K562 (cell line): ENCODE measurements at regions of chr11 and their contacts with region 1.

Region 1: GRCh38 chr11:32176223-32176934 is 85.5 kb downstream of the RCN1 start:
- DNase-seq: peak; percentile 73 to 86 (median 82)
- ATAC-seq: peak; percentile 93
- H3K4me3 ChIP-seq: no peak overlapping the region
- H3K27ac ChIP-seq: no peak overlapping the region
- H3K4me1 ChIP-seq: no peaks in the 10 kb centered on the region
- H3K27me3 ChIP-seq: peaks cover under 1 to 18% of the 10 kb centered on the region in 2 experiments; a peak in 4 of 5 replicates
- CTCF ChIP-seq: peak; percentile 87 to 95 (median 88)
- EP300 ChIP-seq: no peak
- POLR2A ChIP-seq: no peak
- RAD21 ChIP-seq: peak; percentile 85 to 87

Region 2: GRCh38 chr11:31107062-31107461 is 1069.3 kb before region 1 on chr11:
- CTCF ChIA-PET with region 1: interaction called, 7 read pairs
- POLR2A ChIA-PET with region 1: no interaction called
- in situ Hi-C with region 1: no loop called
- intact Hi-C with region 1: loop called (anchors 2 kb)
- DNase-seq: peak; percentile 39 to 58 (median 46)
- ATAC-seq: peak; percentile 76
- H3K4me3 ChIP-seq: no peak overlapping the region
- H3K27ac ChIP-seq: no peak overlapping the region
- H3K4me1 ChIP-seq: no peaks in the 10 kb centered on the region
- H3K27me3 ChIP-seq: no peaks in the 10 kb centered on the region
- CTCF ChIP-seq: peak; percentile 39 to 63 (median 55); a peak in 5 of 6 replicates
- EP300 ChIP-seq: no peak
- POLR2A ChIP-seq: no peak
- RAD21 ChIP-seq: peak; percentile 68 to 77

Region 3: DNA sequence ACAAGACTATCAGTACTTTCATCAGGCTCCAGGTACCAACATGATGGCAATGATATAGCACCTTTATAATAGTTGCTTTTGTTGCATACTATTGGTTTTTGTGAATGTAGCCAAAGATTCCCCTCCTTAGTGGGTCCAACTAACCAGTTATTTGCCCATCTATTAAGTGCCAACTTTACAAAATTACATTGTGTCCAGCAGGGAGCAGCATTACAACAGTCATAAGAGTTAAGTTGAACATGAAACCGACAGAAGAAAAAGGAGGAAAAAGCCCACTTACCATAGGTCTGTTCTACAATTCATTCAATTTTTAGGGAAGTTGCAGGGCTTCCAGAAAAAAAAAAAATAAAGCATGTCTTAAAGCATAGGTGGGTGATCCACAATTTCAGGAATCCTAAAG is 688.5 kb before region 1 on chr11:
- CTCF ChIA-PET with region 1: no interaction called
- POLR2A ChIA-PET with region 1: no interaction called
- in situ Hi-C with region 1: no loop called
- intact Hi-C with region 1: loop called (anchors 10 kb)
- DNase-seq: peak in 2 of 4 experiments; percentile 12 to 43
- ATAC-seq: peak; percentile 67
- H3K4me3 ChIP-seq: no peak overlapping the region
- H3K27ac ChIP-seq: no peak overlapping the region
- H3K4me1 ChIP-seq: no peaks in the 10 kb centered on the region; a peak in 1 of 5 replicates
- H3K27me3 ChIP-seq: no peaks in the 10 kb centered on the region
- CTCF ChIP-seq: peak in 2 of 3 experiments; percentile 34 to 38; a peak in 4 of 6 replicates
- EP300 ChIP-seq: no peak
- POLR2A ChIP-seq: no peak
- RAD21 ChIP-seq: no peak; a peak in 1 of 4 replicates

Region 4: GRCh38 chr11:31641477-31642062 is 534.8 kb before region 1 on chr11:
- CTCF ChIA-PET with region 1: interaction called, 3 read pairs
- POLR2A ChIA-PET with region 1: no interaction called
- in situ Hi-C with region 1: no loop called
- intact Hi-C with region 1: loop called (anchors 10 kb)
- DNase-seq: peak; percentile 12 to 40 (median 18)
- ATAC-seq: no peak
- H3K4me3 ChIP-seq: no peak overlapping the region
- H3K27ac ChIP-seq: no peak overlapping the region
- H3K4me1 ChIP-seq: no peaks in the 10 kb centered on the region
- H3K27me3 ChIP-seq: no peaks in the 10 kb centered on the region
- CTCF ChIP-seq: peak; percentile 35 to 64 (median 58)
- EP300 ChIP-seq: no peak
- POLR2A ChIP-seq: no peak
- RAD21 ChIP-seq: peak; percentile 15 to 45; a peak in 2 of 4 replicates

Region 5: DNA sequence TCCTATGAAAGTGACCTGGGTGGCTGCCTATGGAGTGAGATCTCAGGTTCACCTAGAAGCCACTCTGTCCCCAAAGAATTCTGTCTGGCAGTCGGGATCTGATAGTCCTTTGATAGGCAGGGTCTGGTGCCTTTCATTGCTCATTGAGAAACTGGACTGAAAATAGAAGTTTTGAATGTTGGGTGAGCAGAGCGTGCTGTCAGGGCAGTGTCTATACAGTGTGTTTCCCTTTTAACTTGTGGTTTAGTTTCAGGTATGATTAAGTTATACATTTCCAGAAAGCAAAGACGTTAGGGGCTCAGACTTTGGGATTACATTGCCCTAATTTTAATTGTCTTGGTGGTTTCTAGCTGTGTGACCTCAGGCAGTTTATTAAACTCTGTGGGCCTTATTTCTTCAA is 253.9 kb before region 1 on chr11:
- CTCF ChIA-PET with region 1: no interaction called
- POLR2A ChIA-PET with region 1: no interaction called
- in situ Hi-C with region 1: no loop called
- intact Hi-C with region 1: no loop called
- DNase-seq: no peak
- ATAC-seq: no peak
- H3K4me3 ChIP-seq: no peak overlapping the region
- H3K27ac ChIP-seq: no peak overlapping the region
- H3K4me1 ChIP-seq: no peaks in the 10 kb centered on the region
- H3K27me3 ChIP-seq: no peaks in the 10 kb centered on the region; a peak in 2 of 5 replicates
- CTCF ChIP-seq: no peak
- EP300 ChIP-seq: no peak
- POLR2A ChIP-seq: no peak
- RAD21 ChIP-seq: no peak

Region 6: GRCh38 chr11:32052218-32052617 is 124.2 kb before region 1 on chr11:
- CTCF ChIA-PET with region 1: interaction called, 33 read pairs
- POLR2A ChIA-PET with region 1: no interaction called
- in situ Hi-C with region 1: loop called (anchors 5 kb)
- intact Hi-C with region 1: loop called (anchors 1 kb)
- DNase-seq: peak; percentile 47 to 69 (median 64)
- ATAC-seq: peak; percentile 85
- H3K4me3 ChIP-seq: no peak overlapping the region
- H3K27ac ChIP-seq: no peak overlapping the region
- H3K4me1 ChIP-seq: no peaks in the 10 kb centered on the region
- H3K27me3 ChIP-seq: peaks cover 0 to 3% of the 10 kb centered on the region in 2 experiments; a peak in 1 of 5 replicates
- CTCF ChIP-seq: peak; percentile 67 to 77 (median 70)
- EP300 ChIP-seq: no peak
- POLR2A ChIP-seq: no peak
- RAD21 ChIP-seq: peak; percentile 75 to 77

Region 7: GRCh38 chr11:32213223-32213622 is 36.8 kb after region 1 on chr11:
- CTCF ChIA-PET with region 1: no interaction called
- POLR2A ChIA-PET with region 1: no interaction called
- in situ Hi-C with region 1: no loop called
- intact Hi-C with region 1: no loop called
- DNase-seq: no peak
- ATAC-seq: no peak
- H3K4me3 ChIP-seq: no peak overlapping the region
- H3K27ac ChIP-seq: no peak overlapping the region
- H3K4me1 ChIP-seq: no peaks in the 10 kb centered on the region
- H3K27me3 ChIP-seq: no peaks in the 10 kb centered on the region; a peak in 2 of 5 replicates
- CTCF ChIP-seq: no peak
- EP300 ChIP-seq: no peak
- POLR2A ChIP-seq: no peak
- RAD21 ChIP-seq: no peak